ENCODE measurements at regions of chr11 and their contacts with region 1.

Region 1: GRCh38 chr11:65274735-65275682 is 13.2 kb downstream of the POLA2 start:
- DNase-seq: peak; percentile 89 to 97
- H3K4me3 ChIP-seq: no peak overlapping the region
- H3K27ac ChIP-seq: peak overlapping the region; percentile 60
- H3K4me1 ChIP-seq: peaks cover 39% of the 10 kb centered on the region
- H3K27me3 ChIP-seq: no peaks in the 10 kb centered on the region
- CTCF ChIP-seq: peak; percentile 95

Region 2: DNA sequence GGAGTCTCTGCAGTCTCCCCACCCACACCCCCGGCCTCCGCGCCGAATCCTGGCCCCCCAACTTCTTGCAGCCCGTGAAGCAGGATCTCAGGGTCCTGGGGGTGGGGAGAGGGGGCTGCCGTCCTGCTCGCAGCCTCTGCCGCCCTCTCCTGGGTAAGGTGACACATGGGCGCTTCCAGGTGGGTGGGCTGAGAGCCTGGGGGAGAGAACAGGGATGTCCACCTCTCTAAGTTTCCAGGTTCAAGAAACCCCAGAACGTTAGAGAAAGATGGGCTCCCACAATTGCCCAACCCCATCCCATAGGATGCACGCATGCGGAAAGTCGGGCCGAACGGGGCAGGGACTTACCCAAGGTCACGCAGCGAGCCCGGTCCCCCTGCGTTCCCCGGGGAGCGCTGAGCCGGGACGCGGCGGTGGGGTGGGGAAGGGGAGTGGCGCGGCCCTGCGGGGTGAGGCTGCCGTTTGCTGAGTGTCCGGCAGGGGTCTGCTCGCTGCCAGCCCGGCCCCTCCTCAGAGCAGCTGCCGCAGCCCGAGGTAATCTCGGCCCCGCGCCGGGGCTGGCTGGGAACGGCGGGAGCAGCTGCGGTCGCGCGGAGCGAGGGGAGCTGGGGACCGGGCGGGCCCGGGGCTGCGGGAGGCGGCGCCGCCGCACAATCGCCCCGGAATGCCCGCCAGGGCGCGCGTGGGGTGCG is 94.0 kb before region 1 on chr11:
- CTCF ChIA-PET with region 1: interaction called, 10 read pairs
- POLR2A ChIA-PET with region 1: interaction called, 13 read pairs
- intact Hi-C with region 1: no loop called
- DNase-seq: peak; percentile 70 to 84
- H3K4me3 ChIP-seq: peak overlapping the region; percentile 97
- H3K27ac ChIP-seq: peak overlapping the region; percentile 44
- H3K4me1 ChIP-seq: peaks cover 32% of the 10 kb centered on the region
- H3K27me3 ChIP-seq: no peaks in the 10 kb centered on the region
- CTCF ChIP-seq: peak; percentile 77

Region 3: DNA sequence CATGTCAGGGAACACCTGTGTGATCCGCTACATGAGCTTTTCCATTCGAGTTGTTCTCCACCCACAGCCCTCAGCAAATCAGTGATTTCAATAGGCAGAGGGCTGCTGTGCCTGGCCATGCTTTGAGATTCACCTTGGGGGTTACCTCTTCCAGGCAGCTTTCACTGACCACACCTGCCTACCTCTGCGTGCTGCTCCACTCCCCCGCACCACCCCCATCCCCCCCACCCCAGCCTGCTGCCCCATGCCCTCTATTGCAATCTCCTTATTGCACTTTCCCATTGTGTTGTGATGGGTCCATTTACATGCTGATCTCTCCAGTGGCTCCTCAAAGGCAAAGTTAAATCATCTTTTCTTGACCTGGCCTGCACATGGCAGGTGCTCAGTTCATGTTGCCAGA is 31.2 kb before region 1 on chr11:
- CTCF ChIA-PET with region 1: no interaction called
- POLR2A ChIA-PET with region 1: no interaction called
- intact Hi-C with region 1: no loop called
- DNase-seq: no peak
- H3K4me3 ChIP-seq: no peak overlapping the region
- H3K27ac ChIP-seq: no peak overlapping the region
- H3K4me1 ChIP-seq: no peaks in the 10 kb centered on the region
- H3K27me3 ChIP-seq: no peaks in the 10 kb centered on the region
- CTCF ChIP-seq: no peak

Region 4: DNA sequence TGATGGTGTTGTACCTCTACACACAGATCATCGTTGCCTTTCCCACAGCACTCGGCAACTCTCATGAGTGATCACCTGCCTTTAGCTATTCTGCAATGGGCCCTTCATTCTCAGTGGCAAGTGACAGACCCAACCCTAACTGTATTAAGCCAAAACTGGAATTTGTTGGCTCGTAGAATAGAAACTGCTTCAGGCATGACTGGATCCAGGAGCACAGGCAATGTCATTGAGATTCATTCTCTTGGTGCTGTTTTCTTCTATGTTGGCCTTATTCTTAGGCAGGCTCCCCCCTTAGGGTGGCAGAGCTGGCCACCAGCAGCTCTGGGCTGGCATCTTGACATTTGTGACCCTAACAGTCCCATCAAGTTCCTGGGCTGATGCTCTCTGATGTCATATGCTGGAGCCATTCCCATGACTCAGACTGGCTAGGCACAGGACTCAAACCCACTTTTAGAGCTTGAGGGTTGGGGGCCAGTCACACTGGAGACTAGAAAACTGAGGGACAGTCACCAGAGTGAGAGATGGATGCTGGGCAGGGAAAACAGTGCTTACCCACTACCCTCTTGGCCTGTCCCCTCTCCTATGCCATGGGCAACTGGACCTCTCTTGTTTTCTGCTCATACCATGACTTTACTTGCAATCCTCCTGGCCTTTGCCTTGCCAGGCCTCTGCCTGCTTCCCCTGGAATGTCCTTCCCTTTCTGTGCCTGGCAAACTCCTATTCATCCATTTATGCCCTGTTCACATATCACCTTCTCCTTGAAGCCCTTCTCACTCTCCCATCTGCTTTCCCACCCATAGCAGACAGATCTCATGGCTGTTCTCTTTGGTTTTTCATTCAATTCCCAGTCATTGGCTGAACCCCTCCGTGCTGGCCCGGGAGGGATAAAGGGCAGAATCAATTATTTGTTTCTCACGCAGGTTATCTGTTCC is 32.6 kb after region 1 on chr11:
- CTCF ChIA-PET with region 1: interaction called, 16 read pairs
- POLR2A ChIA-PET with region 1: interaction called, 17 read pairs
- intact Hi-C with region 1: no loop called
- DNase-seq: no peak
- H3K4me3 ChIP-seq: no peak overlapping the region
- H3K27ac ChIP-seq: no peak overlapping the region
- H3K4me1 ChIP-seq: peaks cover 42% of the 10 kb centered on the region
- H3K27me3 ChIP-seq: no peaks in the 10 kb centered on the region
- CTCF ChIP-seq: no peak

Region 5: GRCh38 chr11:65366340-65366773 is 91.3 kb after region 1 on chr11:
- CTCF ChIA-PET with region 1: interaction called, 18 read pairs
- POLR2A ChIA-PET with region 1: no interaction called
- intact Hi-C with region 1: no loop called
- DNase-seq: peak; percentile 55 to 71
- H3K4me3 ChIP-seq: no peak overlapping the region
- H3K27ac ChIP-seq: no peak overlapping the region
- H3K4me1 ChIP-seq: peaks cover 9% of the 10 kb centered on the region
- H3K27me3 ChIP-seq: no peaks in the 10 kb centered on the region
- CTCF ChIP-seq: peak; percentile 92

Region 6: DNA sequence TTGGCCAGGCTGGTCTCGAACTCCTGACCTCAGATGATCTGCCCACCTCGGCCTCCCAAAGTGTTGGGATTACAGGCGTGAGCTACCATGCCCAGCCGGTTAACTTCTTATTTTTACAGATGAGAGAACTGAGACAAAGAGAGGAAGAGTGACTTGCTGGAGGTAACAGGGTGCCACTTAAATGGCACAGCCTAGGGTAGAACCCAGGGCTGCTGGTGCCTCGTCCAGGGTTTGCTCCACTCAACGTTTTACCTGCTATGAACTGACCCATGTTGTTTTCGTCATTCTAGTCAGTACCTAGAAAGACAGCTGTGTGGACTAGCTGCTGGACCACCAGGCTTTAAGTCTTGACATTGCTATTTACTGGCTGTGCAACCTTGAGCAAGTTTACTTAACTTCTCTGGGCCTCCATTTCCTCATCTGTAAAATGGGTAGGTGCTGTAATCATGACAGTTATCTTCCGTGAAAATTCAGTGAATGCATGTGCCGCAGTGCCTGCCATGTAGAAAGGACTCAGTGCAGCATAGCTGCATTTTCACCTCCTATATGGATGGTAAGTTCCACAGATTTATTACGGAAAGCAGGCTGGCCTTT is 211.5 kb after region 1 on chr11:
- CTCF ChIA-PET with region 1: no interaction called
- POLR2A ChIA-PET with region 1: no interaction called
- intact Hi-C with region 1: no loop called
- DNase-seq: no peak
- H3K4me3 ChIP-seq: no peak overlapping the region
- H3K27ac ChIP-seq: no peak overlapping the region
- H3K4me1 ChIP-seq: peaks cover 79% of the 10 kb centered on the region
- H3K27me3 ChIP-seq: no peaks in the 10 kb centered on the region
- CTCF ChIP-seq: no peak

Region 7: GRCh38 chr11:65506770-65507505 is 231.9 kb after region 1 on chr11:
- CTCF ChIA-PET with region 1: interaction called, 9 read pairs
- POLR2A ChIA-PET with region 1: interaction called, 20 read pairs
- intact Hi-C with region 1: loop called (anchors 1 kb)
- DNase-seq: no peak
- H3K4me3 ChIP-seq: peak overlapping the region; percentile 23; the same call in 1 of the 2 replicates
- H3K27ac ChIP-seq: peak overlapping the region; percentile 97
- H3K4me1 ChIP-seq: peaks cover 56% of the 10 kb centered on the region
- H3K27me3 ChIP-seq: no peaks in the 10 kb centered on the region
- CTCF ChIP-seq: no peak